H1 (cell line): ENCODE measurements at regions of chr1 and their contacts with region 1.

Region 1: DNA sequence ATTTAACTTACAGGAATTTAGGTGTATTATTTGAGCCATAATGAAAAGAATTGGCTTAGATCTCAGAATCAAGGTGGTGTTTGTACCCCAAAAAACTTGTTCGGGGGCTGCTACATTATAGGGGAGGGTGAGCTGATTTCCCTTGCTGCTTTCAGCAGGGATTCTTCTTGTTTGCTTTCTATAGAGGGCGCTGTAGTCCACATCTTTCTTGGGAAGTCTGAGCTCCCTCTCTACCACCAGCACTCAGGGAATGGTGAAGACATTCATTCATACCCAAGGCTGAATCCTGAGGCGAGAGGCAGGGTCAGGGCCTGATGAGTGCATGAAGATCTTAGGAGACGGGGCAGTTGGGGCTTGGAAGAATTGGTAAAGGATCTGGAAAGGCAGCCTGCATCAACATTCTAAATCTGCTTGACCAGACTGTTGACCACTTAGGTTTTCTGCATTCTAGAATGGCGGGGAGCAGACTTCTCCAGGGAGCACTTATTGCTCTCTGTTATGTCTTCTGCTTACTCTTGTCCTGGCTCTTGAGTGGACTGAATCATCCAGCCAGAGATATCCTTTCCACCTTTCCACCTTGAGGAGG is 18.9 kb downstream of the SPATA46 start:
- DNase-seq: no peak
- H3K4me3 ChIP-seq: no peak overlapping the region
- H3K27ac ChIP-seq: no peak overlapping the region
- H3K4me1 ChIP-seq: peaks cover 0 to 8% (median 4%) of the 10 kb centered on the region in 4 experiments; a peak in 5 of 7 replicates
- H3K27me3 ChIP-seq: no peaks in the 10 kb centered on the region
- CTCF ChIP-seq: peak; percentile 14 to 81 (median 64)
- EP300 ChIP-seq: no peak
- POLR2A ChIP-seq: no peak
- RAD21 ChIP-seq: peak; percentile 81 to 88

Region 2: DNA sequence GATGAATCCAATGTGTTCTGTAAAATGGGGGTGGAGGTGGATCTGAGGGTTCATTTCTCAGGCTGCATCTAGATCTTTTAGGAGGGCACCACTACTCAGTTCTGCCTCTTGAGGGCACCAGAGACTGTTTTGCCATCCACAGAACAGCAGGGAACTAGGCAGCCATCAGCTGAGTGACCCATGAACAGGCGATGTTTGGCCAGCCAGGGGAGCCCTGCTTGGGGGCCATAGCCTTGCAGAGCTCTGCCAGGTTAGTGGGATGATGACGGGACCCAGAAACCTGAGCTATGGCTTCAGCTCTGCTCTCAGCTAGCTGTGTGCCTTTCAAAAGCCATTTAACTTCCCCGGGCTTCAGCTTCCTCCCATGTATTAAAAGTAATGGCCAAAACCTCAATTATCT is 301.7 kb before region 1 on chr1:
- CTCF ChIA-PET with region 1: interaction called, 19 read pairs
- POLR2A ChIA-PET with region 1: no interaction called
- DNase-seq: peak; percentile 64 to 87
- H3K4me3 ChIP-seq: no peak overlapping the region
- H3K27ac ChIP-seq: no peak overlapping the region
- H3K4me1 ChIP-seq: no peaks in the 10 kb centered on the region
- H3K27me3 ChIP-seq: no peaks in the 10 kb centered on the region
- CTCF ChIP-seq: peak; percentile 77 to 99 (median 97)
- EP300 ChIP-seq: no peak
- POLR2A ChIP-seq: no peak
- RAD21 ChIP-seq: peak; percentile 100

Region 3: GRCh38 chr1:162206300-162206699 is 151.5 kb before region 1 on chr1:
- CTCF ChIA-PET with region 1: no interaction called
- POLR2A ChIA-PET with region 1: no interaction called
- DNase-seq: no peak
- H3K4me3 ChIP-seq: no peak overlapping the region
- H3K27ac ChIP-seq: no peak overlapping the region
- H3K4me1 ChIP-seq: peaks cover 0 to 12% (median under 1%) of the 10 kb centered on the region in 4 experiments; a peak in 4 of 7 replicates
- H3K27me3 ChIP-seq: no peaks in the 10 kb centered on the region
- CTCF ChIP-seq: no peak
- EP300 ChIP-seq: no peak
- POLR2A ChIP-seq: no peak
- RAD21 ChIP-seq: no peak

Region 4: GRCh38 chr1:162336621-162337285 is 21.0 kb before region 1 on chr1:
- CTCF ChIA-PET with region 1: interaction called, 59 read pairs
- POLR2A ChIA-PET with region 1: interaction called, 3 read pairs
- DNase-seq: no peak
- H3K4me3 ChIP-seq: no peak overlapping the region
- H3K27ac ChIP-seq: no peak overlapping the region
- H3K4me1 ChIP-seq: no peaks in the 10 kb centered on the region
- H3K27me3 ChIP-seq: no peaks in the 10 kb centered on the region
- CTCF ChIP-seq: no peak
- EP300 ChIP-seq: no peak
- POLR2A ChIP-seq: no peak
- RAD21 ChIP-seq: no peak

Region 5: GRCh38 chr1:162373541-162374375 is 16.0 kb after region 1 on chr1:
- CTCF ChIA-PET with region 1: interaction called, 31 read pairs
- POLR2A ChIA-PET with region 1: no interaction called
- DNase-seq: no peak
- H3K4me3 ChIP-seq: no peak overlapping the region
- H3K27ac ChIP-seq: no peak overlapping the region
- H3K4me1 ChIP-seq: 0 out of 7 replicates have a peak, but pooled peaks cover 0 to 1% (median 0%) of the 10 kb centered on the region in 4 experiments
- H3K27me3 ChIP-seq: no peaks in the 10 kb centered on the region
- CTCF ChIP-seq: no peak
- EP300 ChIP-seq: no peak
- POLR2A ChIP-seq: no peak
- RAD21 ChIP-seq: no peak

Region 6: GRCh38 chr1:162391790-162392563 is 34.2 kb after region 1 on chr1:
- CTCF ChIA-PET with region 1: interaction called, 46 read pairs
- POLR2A ChIA-PET with region 1: interaction called, 3 read pairs
- DNase-seq: peak in 1 of 2 experiments; percentile 40
- H3K4me3 ChIP-seq: no peak overlapping the region
- H3K27ac ChIP-seq: no peak overlapping the region
- H3K4me1 ChIP-seq: peaks cover 0 to 6% (median 1%) of the 10 kb centered on the region in 4 experiments; a peak in 4 of 7 replicates
- H3K27me3 ChIP-seq: no peaks in the 10 kb centered on the region
- CTCF ChIP-seq: peak in 2 of 3 experiments; percentile 63 to 69; a peak in 3 of 4 replicates
- EP300 ChIP-seq: no peak
- POLR2A ChIP-seq: no peak
- RAD21 ChIP-seq: peak; percentile 81 to 83